GM23248 (cell line): ENCODE measurements at regions of chr3 and their contacts with region 1.

Region 1: DNA sequence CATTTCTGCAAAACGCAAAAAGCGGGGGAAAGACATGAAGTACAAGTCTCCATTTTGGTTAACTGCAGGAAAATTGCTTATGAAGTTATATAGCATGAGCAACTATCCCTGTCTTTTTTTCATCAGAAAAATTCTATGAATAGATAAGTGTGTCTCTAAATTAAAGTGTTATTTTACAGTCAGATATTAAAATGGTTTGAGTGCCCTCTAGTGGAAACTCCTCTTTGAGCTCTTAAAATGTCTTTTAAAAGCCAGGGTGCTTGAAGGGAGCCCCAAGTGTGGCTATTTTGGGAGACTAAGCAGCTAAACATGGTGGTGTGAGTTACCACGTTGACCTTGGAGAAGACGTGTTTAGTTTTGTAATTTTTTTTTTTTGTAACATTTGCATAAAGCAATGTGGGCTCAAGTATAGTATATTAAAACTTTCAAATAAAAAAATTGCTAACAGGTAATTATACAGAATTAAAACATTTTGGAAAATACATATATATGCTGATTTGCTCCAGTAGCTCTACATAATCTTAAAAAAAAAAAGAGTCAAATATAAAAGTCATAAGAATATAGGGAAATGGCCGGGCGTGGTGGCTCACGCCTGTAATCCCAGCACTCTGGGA is 77.2 kb downstream of the PPP2R3A start:
- DNase-seq: peak; percentile 74
- H3K4me3 ChIP-seq: no peak overlapping the region
- H3K27ac ChIP-seq: no peak overlapping the region
- H3K4me1 ChIP-seq: no peaks in the 10 kb centered on the region
- H3K27me3 ChIP-seq: no peaks in the 10 kb centered on the region

Region 2: DNA sequence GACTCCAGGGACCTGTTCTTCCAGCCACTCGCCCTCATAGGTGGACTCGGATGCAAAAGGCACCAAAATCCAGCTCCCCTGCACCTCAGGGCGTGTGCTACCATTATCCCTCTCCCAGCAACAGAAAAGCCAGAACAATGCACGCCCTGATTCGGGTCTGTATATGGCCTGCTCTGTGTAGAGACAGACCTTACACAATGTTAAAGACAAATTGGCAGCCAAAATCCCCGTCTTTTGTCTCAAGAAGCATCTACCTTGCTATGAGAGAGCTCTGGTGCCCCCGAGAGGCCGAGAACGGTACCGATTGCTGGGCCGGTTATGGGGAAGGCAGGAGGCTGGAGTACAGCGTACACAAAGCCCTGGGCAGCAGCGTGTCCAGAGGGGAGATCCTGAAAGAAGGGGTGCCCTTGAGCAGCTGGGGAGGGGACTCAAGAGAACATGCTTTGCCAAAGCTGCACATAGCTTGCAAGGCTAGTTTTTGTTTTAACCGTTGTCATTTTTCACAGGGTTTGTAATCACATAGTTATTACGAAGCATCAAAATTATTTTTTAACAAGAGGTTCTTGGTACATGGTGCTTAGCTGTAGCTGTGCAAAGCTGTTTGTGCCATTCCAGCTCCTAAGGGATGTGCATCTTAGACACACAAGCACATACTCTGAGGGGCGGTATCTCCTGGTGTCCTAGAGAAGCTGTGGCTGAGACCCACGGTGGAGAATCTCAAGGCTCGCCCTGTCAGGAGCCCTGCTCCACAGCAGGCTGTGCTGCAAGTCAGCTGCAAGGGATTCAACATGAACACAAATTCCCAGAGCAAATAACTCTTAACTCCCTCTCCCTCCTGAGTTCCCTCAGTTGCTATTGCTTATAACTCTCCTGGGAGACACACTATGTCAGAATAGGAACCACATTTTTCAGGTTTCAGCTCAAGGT is 538.7 kb before region 1 on chr3:
- in situ Hi-C with region 1: loop called (anchors 25 kb)
- DNase-seq: peak; percentile 79
- H3K4me3 ChIP-seq: no peak overlapping the region
- H3K27ac ChIP-seq: no peak overlapping the region
- H3K4me1 ChIP-seq: no peaks in the 10 kb centered on the region
- H3K27me3 ChIP-seq: peaks cover 18% of the 10 kb centered on the region

Region 3: GRCh38 chr3:135918580-135918962 is 124.1 kb before region 1 on chr3:
- in situ Hi-C with region 1: loop called (anchors 5 kb)
- DNase-seq: peak; percentile 71
- H3K4me3 ChIP-seq: no peak overlapping the region
- H3K27ac ChIP-seq: no peak overlapping the region
- H3K4me1 ChIP-seq: no peaks in the 10 kb centered on the region
- H3K27me3 ChIP-seq: no peaks in the 10 kb centered on the region

Region 4: DNA sequence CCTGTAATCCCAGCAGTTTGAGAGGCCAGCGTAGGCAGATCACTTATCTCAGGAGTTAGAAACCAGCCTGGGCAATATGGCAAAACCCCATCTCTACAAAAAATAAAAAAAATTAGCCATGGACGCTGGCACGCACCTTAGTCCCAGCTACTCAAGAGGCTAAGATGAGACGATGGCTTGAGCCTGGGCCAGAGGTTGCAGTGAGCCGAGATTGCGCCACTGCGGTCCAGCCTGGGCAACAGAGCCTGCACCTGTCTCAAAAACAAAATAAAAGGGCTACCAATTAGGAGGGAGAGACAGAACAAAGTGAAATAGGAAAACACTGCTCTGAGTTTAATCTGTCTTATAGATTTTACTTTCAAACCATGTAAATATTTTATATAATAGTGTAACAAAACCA is 119.6 kb after region 1 on chr3:
- in situ Hi-C with region 1: no loop called
- DNase-seq: no peak
- H3K4me3 ChIP-seq: no peak overlapping the region
- H3K27ac ChIP-seq: no peak overlapping the region
- H3K4me1 ChIP-seq: peaks cover 14% of the 10 kb centered on the region; the same call in 1 of the 2 replicates
- H3K27me3 ChIP-seq: no peaks in the 10 kb centered on the region